GM10248 (cell line): ENCODE measurements at regions of chr2 and their contacts with region 1.

Region 1: DNA sequence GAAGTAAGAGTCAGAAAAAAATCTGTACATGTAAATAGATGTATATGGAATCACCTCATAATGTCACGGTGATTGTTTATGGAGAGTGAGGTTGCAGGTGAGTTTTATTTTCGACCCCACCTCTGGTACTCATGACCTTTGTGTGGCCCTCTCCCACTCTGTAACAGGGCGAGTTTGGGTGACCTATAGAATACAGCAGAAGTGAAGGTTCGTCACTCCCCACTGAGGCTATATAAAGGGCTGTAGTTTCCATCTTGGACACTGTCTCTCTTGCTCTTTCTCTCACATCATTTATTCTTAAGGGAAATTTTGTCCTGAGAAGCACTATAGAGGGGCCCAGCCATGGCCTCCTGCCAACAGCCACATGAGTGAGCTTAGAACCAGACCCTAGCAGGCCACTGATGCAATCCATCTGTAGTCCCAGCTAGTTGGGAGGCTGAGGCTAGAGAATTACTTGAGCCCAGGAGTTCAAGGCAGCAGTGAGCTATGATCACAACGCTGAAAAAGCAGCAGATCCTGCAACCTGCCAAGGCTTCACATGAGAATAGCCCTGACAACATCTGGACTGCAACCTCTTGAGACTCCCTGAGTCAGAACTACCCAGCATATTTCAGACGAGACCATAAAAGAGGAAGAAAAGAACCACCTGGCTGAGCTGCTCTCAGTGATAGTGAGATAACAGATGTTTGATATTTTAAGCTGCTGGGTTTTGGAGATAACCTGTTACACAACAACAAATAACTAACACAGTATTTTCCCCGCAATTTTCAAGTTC is 74.3 kb upstream of the SLC1A4 start:
- DNase-seq: peak; percentile 72
- CTCF ChIP-seq: no peak

Region 2: DNA sequence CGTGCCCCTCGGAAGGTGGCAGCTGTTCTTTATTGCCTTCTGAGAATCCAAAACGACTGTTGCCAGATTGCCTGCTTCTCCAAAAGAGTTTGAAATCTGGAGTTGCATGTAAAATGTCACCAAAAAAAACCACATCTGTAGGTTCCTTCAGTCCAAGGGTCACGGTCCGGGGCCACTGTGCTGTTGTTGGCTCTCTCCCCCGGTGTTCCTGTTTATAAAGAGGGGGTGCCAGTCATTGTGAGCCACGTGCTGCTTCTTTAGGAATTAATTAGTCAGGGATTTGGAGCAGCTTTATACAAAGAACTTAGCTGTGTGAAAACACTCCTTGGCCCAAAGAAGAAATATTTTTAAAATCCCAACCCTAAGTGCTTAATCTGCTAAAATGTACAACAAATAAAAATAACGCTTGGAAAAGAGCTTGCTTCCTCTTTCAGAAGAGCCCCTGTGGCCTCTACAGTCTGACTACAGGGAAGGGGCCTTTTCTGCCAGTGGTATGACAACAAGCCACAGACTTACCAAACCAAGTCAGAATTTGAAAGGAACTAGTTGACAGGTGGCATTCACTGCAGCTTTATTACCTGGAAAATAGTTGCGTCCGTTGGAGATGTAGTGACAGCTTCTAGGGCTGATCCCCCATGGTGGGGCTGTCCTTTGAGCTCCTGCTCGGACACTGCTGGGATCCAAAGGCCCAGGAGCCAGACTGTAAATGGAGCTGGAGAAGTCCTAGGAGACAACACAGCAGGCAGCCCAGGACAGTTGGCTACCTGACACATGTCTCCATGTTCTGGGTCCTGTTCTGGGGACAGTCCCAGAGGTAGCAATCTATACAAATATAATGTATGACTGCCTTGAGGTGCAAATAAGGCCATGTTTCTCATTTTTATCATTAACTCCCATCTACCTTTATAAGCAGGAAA is 10.3 kb before region 1 on chr2:
- CTCF ChIA-PET with region 1: interaction called, 61 read pairs
- POLR2A ChIA-PET with region 1: no interaction called
- DNase-seq: no peak
- CTCF ChIP-seq: no peak

Region 3: GRCh38 chr2:64945973-64946768 is 31.2 kb after region 1 on chr2:
- CTCF ChIA-PET with region 1: interaction called, 277 read pairs
- POLR2A ChIA-PET with region 1: interaction called, 9 read pairs
- DNase-seq: peak; percentile 80
- CTCF ChIP-seq: no peak

Region 4: DNA sequence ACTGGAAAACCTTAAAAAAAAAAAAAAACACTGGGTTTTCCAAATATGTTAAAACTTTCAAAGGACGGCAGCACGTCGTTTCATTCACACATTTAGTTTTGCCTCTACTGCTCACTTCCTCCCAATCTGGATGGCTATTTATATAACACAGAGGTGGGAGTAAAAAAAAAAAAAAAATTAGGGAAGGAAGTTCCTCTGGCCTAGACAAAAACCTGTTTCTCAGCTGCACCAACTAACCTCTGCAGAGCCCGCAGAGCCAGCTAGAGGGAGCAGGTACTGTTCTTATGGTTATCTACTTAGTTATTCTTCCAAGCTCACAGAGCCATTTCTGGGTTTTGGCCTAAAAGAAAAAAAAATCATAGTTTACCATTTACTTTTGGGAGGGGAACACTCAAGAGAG is 102.4 kb after region 1 on chr2:
- CTCF ChIA-PET with region 1: interaction called, 11 read pairs
- POLR2A ChIA-PET with region 1: no interaction called
- DNase-seq: peak; percentile 53
- CTCF ChIP-seq: peak; percentile 55

Region 5: DNA sequence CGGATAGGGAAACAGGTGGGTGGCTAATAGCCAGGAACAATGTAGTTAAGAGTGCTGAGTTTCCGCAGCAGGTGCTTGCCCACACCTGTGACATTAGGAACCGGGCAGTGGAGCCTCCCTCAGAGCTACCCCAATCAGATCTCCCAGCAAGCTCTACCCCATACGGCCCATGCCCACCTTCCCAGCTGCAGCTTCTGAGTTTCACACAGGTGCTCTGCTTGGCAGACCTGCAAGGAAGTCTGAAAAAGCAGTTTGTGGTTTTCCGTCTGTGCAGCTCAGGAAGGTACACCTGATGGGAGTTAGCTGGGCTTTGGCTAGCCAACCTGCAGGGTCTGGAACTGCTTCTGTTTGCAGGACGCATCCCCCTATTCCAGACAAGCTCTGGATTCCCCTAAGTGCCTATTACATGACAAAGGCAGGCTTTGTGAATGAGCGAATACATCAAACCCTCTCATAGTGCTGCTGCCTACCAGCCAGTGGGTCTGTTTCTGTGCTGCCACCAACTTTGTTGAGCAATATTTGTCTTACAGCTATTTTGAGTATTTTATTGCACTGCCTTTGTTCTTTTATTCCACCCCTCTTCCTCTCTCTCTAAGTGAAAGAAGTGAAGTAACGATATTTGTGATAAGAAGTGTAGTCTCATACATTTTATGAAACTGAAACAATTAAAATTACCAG is 116.6 kb after region 1 on chr2:
- CTCF ChIA-PET with region 1: interaction called, 21 read pairs
- POLR2A ChIA-PET with region 1: no interaction called
- DNase-seq: no peak
- CTCF ChIP-seq: no peak

Region 6: DNA sequence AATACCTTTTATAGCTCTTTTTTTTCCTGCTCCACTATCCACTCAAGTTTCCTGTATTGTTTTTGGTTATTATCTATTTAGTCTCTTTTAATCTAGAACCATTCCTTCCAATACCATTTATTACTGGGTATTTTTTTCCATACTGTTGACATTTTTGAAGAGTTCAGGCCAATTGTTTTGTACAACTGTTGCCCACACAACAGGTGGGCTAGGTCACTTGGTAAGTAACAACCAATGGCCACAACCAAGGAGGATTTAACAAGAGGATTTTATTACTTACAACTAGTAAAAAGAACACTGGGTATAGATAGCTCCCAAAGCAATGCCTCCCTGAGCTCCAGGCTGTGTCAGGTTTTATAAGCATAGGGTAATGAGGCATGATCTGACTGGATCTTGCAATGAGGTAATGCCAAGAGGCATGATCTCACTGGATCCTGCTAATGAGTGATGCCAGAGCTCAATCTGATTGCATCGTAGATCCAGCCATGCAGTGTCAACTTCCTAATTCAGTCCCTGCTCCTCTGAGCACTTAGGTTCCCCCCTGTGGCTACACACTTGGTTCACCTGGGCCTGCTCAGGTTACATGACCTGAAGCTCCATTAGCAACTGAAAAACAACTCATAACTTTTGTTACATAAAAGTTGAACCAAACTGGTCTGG is 134.2 kb after region 1 on chr2:
- CTCF ChIA-PET with region 1: interaction called, 18 read pairs
- POLR2A ChIA-PET with region 1: interaction called, 7 read pairs
- DNase-seq: no peak
- CTCF ChIP-seq: no peak